HEK293T (cell line): ENCODE measurements at regions of chr17 and their contacts with region 1.

Region 1: DNA sequence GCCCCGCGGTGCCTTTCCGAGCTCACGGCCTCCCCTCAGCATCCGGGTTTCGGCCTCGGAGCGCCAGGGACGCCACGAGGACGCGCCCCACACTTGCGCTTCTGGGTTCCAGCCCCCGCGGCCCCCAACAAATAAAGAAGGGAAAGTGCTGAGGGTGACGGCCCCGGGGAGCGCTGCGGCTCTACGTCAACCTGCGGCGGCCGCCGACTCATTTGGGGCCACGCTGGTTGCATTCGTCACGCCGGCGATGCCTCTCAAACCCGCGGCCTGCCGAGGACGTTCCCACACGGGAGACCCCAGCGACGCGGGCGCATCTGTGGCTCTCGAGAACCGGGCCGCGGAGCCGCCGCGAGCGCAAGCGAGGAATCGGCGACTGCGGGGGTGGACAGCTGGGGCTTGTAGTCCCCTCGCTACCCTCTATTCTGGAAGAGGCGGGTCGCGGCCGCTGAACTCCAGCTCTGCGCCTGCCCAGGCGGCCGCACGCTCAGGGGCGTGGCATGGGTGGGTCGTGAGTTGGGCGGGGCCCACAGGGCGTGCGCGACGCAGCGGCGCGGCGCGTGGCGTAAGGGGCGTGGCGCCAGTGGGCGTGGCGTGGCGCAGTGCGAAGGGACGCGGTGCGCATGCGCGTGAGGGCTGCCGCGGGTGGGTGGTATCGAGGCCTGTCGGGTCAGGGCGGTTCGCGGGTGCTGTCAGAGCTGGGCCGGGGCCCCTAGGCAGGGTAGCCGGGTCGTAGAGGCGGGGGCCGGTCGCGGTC is at the start of gene AMZ2:
- DNase-seq: peak; percentile 97

Region 2: GRCh38 chr17:68205251-68205807 is 42.3 kb before region 1 on chr17:
- CTCF ChIA-PET with region 1: interaction called, 4 read pairs
- POLR2A ChIA-PET with region 1: interaction called, 14 read pairs
- DNase-seq: peak; percentile 89

Region 3: DNA sequence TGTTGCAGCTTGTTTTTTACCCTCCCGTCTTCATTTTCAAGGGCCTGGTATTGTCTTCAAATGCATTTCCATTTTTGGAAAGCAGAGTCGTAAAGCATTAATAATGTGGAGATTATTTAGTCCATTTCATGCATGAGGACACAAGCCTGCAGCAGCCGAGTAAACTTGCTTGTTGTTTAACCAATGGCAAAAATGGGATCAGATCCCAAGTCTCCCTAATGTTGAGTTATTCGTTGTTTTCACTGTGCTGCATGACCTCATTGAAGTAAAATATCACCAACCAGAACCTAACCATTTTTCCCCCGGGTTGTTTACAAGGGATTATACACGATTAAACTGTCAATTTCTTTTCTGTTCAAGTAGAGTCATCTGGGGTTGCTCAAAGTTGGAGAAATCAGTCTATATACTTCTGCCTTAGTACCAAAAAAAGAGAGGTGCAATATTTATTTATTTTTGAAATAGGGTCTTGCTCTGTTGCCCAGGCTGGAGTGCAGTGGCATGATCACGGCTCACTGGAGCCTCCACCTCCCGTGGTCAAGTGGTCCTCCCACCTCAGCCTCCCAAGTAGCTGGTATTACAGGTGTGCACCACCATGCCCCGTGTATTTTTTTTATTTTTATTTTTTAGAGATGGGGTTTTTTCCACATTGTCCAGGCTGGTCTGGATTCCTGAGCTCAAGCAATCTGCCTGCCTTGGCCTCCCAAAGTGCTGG is 12.6 kb after region 1 on chr17:
- CTCF ChIA-PET with region 1: interaction called, 3 read pairs
- POLR2A ChIA-PET with region 1: interaction called, 15 read pairs
- DNase-seq: no peak

Region 4: GRCh38 chr17:68318103-68318991 is 70.7 kb after region 1 on chr17:
- CTCF ChIA-PET with region 1: no interaction called
- POLR2A ChIA-PET with region 1: no interaction called
- DNase-seq: no peak

Region 5: GRCh38 chr17:68377862-68378770 is 130.5 kb after region 1 on chr17:
- CTCF ChIA-PET with region 1: no interaction called
- POLR2A ChIA-PET with region 1: no interaction called
- DNase-seq: no peak

Region 6: GRCh38 chr17:68417317-68417716 is 169.7 kb after region 1 on chr17:
- CTCF ChIA-PET with region 1: no interaction called
- POLR2A ChIA-PET with region 1: no interaction called
- DNase-seq: no peak

Region 7: DNA sequence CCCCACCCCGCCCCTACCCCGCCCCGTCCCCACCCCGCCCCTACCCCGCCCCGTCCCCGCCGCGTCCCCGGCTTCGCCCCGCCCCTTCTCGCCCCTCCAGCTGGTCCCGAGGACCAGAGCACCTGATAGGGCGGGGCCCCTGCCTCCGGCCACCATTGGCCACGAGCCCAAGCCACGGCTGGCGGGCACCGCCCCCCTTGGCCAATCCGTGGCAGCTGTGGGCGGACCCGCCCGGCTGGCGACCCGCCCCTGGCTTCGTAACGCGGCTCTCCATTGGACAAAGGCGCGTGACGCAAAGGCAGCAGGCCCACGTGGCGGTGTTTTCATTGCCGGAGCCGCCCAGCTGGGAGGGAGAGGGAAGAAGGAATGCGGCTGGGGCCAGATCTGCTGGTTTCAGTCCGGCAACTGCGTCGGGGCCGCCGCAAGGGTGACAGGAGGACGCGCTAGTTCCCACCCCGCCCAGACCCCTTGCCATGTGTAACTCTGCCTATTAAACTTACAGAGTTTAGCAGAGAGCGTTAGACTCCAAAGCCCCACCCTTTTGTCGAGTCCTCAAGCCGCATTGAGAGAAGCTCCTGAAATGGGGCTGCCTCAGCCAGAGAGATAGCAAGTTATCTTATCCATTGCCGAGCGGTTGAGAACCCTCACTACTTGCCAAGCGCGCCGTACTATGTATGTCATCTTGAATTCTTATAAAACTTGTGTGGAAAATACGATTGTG is 210.1 kb after region 1 on chr17:
- CTCF ChIA-PET with region 1: interaction called, 3 read pairs
- POLR2A ChIA-PET with region 1: interaction called, 19 read pairs
- DNase-seq: peak; percentile 99